Dorsolateral prefrontal cortex (tissue), 120 donors: ENCODE measurements at regions of chr2 and their contacts with region 1.

Region 1: DNA sequence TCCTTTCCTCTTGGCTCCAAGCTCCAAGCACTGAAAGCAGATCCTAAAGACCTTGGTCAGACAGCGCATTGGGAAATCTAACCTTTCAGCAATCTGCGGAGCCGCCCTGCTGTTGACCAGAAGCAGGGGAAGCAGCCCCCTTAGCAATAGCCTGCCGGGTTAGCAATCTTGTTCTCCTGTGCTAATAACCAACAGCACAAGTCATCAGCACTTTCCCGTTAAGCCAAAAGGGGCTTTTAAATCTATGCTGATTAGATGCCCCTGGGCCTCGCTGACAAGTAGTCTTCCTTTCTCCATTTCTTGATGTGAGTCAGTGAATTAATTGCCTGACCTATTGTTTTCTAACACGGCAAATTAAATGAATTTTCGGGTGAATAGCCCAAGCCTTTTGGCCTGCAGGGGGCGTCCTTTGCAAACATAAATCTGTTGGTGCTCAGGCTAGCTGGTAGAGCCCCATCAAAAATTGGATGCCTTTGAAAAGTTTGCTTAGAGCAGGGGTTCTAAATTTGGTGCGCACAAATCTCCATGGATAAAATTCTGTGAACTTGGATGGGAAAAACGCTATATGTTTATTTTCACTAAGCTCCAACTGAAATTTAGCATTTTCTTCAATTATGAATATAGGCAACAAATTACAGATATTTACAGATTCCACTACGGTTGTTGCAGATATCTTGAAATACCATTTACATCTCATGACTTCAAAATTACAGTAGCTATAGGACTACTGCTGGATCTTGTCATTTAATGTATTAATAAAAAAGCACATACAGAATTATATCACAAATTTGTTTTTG is 24.6 kb downstream of the MAIP1 start:
- DNase-seq: peak; percentile 78 to 95 (median 89)
- H3K4me3 ChIP-seq: peak overlapping the region in 55 of 59 donors; percentile 11 to 66 (median 43)
- H3K27ac ChIP-seq: peak overlapping the region in 15 of 59 donors; percentile 1 to 65 (median 24)
- H3K27me3 ChIP-seq: no peaks in the 10 kb centered on the region
- CTCF ChIP-seq: peak; percentile 85 to 99 (median 94)

Region 2: DNA sequence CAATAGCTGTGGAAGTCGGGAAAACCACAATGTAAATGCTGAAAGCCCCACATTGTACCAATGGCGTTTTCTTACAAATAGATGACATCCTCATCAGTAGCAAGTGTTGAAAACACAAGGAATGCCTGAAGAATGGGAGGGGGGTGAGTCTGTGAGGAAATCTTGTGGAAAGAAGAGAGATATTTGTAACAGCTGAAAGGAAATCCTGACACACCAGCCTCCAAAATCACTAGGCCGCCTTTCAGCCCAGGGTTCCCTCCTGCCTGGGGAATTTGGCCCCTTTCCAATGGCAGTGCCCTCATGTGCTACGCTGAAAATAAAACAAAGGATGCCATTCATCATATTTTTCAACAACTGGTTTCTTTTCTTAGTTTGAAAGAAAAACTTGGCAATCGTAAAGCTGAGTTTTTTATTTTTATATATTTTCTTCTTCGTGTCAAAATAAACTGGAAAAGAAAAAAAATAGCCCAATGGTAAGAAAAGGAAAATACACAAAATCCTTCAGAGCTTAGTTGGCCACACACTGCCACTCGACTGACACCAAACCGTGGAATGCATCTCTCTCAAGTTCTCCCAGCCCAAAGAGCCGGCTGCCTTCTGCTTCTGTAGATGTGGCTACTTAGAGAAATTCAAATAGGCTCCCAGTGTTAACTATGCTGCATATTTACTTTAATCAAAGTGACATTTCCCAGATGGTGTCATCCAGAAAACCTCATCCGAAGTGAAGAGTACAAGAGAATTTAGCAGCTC is 181.0 kb before region 1 on chr2:
- intact Hi-C with region 1: no loop called
- DNase-seq: peak; percentile 18 to 67 (median 56)
- H3K4me3 ChIP-seq: peak overlapping the region in 37 of 59 donors; percentile 1 to 54 (median 28)
- H3K27ac ChIP-seq: peak overlapping the region in 58 of 59 donors; percentile 55 to 96 (median 85)
- H3K27me3 ChIP-seq: no peaks in the 10 kb centered on the region
- CTCF ChIP-seq: peak in 5 of 56 donors; percentile 8 to 26 (median 13)

Region 3: DNA sequence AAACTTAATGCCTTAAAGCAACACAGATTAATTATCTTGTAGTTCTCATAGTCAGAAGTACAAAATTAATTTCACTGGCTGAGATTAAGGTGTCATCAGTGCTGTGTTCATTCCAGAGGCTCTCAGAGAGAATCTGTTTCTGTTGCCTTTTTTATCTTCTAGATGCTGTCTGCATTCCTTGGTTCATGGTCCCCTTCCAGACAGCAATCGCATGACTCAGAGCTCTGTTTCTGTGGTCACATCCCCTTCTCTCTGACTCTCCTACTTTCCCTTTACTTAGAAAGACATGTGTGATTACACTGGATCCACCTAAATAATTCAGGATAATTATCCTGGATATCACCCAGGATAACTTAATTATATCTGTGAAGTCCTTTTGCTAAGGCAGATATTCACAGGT is 124.0 kb after region 1 on chr2:
- intact Hi-C with region 1: no loop called
- DNase-seq: no peak
- H3K4me3 ChIP-seq: no peak overlapping the region
- H3K27ac ChIP-seq: no peak overlapping the region
- H3K27me3 ChIP-seq: no peaks in the 10 kb centered on the region
- CTCF ChIP-seq: no peak

Region 4: GRCh38 chr2:200121931-200122330 is 141.9 kb after region 1 on chr2:
- intact Hi-C with region 1: no loop called
- DNase-seq: no peak
- H3K4me3 ChIP-seq: no peak overlapping the region
- H3K27ac ChIP-seq: no peak overlapping the region
- H3K27me3 ChIP-seq: no peaks in the 10 kb centered on the region
- CTCF ChIP-seq: no peak

Region 5: GRCh38 chr2:200471324-200471848 is 491.4 kb after region 1 on chr2:
- intact Hi-C with region 1: loop called (anchors 2 to 5 kb)
- DNase-seq: peak in 5 of 10 donors; percentile 48 to 57 (median 55)
- H3K4me3 ChIP-seq: peak overlapping the region in 2 of 59 donors; percentile 45
- H3K27ac ChIP-seq: peak overlapping the region; percentile 23 to 99 (median 94)
- H3K27me3 ChIP-seq: no peaks in the 10 kb centered on the region
- CTCF ChIP-seq: peak; percentile 23 to 82 (median 70)

Region 6: DNA sequence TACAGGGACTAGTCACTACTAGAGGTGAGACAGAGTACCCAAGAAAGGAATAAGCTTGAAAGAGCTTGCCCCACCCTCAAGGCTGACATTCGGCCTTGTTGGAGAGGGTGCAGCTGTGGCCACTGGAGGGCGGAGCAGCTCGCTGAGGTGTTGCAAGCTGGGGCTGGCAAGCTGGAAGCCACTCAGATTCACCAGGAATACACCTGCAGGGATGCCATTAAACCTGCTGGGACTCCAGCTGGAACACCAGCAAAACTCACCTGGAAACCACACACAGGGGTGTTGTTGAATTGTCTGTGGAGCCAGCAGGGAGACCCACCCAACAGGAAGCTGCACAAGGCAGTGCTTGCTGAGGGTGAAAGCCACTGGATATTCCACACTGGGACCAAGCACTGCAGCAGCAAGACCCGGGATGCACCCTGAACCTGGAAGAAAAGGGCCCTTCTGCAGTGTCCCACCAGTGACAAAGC is 503.7 kb after region 1 on chr2:
- intact Hi-C with region 1: loop called (anchors 2 to 5 kb)
- DNase-seq: no peak
- H3K4me3 ChIP-seq: no peak overlapping the region
- H3K27ac ChIP-seq: no peak overlapping the region
- H3K27me3 ChIP-seq: no peaks in the 10 kb centered on the region
- CTCF ChIP-seq: no peak